ENCODE measurements at regions of chr4 and their contacts with region 1.

Region 1: DNA sequence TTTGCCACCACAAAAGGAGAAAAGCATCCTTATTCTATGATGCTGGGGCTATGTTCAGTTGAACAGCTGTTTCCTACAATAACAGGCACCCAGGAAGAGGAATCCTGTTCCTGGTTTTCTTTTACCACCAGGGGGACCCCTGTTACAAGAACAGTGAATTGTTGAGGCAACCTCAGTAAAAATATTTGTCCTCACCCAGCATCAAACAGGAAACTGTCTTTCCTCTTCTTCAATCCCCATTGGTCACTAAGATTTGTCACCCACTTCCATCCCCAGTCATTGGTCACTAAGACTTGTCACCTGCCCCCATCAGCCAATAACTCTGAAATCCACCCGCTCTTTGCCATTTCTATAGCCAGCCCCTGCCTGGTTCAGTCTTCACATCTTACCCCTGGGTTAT is 143.5 kb upstream of the GALNT7 start:
- DNase-seq: peak in 1 of 2 donors; percentile 20
- H3K4me3 ChIP-seq: no peak overlapping the region
- H3K27ac ChIP-seq: no peak overlapping the region
- H3K4me1 ChIP-seq: no peaks in the 10 kb centered on the region
- H3K27me3 ChIP-seq: no peaks in the 10 kb centered on the region
- CTCF ChIP-seq: peak; percentile 49 to 68 (median 63)
- POLR2A ChIP-seq: no peak

Region 2: GRCh38 chr4:172927096-172927814 is 97.9 kb before region 1 on chr4:
- intact Hi-C with region 1: no loop called
- DNase-seq: no peak
- H3K4me3 ChIP-seq: no peak overlapping the region
- H3K27ac ChIP-seq: no peak overlapping the region
- H3K4me1 ChIP-seq: no peaks in the 10 kb centered on the region
- H3K27me3 ChIP-seq: no peaks in the 10 kb centered on the region
- CTCF ChIP-seq: no peak
- POLR2A ChIP-seq: no peak

Region 3: DNA sequence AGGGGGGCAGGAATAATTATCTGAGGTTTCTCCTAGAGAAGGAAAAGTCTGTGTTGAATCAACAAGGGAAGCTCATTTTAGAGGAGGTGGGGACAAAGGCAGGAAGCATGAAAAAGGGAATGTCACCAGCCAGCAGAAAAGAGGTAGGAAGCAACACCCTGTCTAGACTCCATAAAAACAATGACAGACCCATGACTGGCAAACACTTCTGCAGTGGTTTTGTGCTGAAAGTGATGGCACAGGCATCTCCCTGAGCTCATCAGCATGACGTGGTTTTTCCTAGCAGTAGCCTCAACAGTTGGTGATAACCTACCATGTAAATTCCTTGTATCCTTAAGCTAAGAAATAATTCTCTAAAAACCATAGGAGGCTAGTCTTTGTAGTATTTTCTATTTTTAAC is 32.8 kb after region 1 on chr4:
- intact Hi-C with region 1: no loop called
- DNase-seq: no peak
- H3K4me3 ChIP-seq: no peak overlapping the region
- H3K27ac ChIP-seq: no peak overlapping the region
- H3K4me1 ChIP-seq: no peaks in the 10 kb centered on the region
- H3K27me3 ChIP-seq: no peaks in the 10 kb centered on the region
- CTCF ChIP-seq: no peak
- POLR2A ChIP-seq: no peak

Region 4: DNA sequence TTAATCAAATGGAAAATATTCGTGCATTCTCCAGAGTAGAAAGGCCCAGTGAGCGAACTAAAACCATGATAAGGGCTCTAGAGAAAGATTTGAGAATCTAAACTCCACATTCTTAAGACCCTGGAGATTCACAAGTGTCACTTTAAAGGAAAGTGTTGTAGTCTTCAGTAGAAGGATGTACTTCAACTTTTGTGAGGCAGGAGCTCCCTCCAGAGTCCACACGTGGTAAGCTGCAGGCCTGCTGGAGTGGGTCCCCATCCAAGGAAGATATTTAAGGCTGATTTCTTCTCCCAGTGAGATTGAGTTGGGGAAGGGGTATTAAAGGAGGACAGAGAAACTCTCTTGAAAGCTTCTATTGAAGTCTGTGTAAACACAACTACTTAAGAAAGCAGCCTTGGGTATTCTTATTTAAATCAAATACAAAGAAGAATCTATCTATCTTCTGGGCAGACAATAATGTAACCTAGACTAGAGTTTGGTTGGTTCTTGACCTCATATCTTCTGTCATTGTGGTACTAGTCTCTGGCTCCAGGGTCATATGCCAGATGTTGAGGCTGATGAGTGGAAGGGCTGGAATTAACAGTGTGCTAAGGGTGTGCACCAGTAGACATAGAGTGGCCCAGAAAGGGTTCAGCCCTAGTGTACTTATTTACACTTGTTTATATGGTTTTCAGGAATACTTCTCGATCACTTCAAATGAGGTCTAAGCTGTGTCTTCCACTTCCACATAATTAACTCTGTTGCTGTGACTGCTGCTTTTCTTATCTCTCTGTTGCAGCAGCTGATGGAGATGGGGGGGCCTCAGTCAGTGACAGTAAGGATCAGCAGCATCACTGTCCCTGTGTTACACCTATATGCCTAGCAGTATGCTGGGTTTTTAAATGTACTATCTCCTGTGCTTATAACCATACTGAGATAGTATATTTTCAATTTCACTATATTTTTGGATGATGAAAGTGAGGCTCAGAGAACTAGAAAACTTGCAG is 232.9 kb after region 1 on chr4:
- intact Hi-C with region 1: loop called (anchors 10 kb)
- DNase-seq: peak in 1 of 2 donors; percentile 28
- H3K4me3 ChIP-seq: no peak overlapping the region
- H3K27ac ChIP-seq: no peak overlapping the region
- H3K4me1 ChIP-seq: no peaks in the 10 kb centered on the region
- H3K27me3 ChIP-seq: no peaks in the 10 kb centered on the region
- CTCF ChIP-seq: peak in 2 of 3 donors; percentile 61 to 72
- POLR2A ChIP-seq: no peak